ENCODE measurements at regions of chr19 and their contacts with region 1.

Region 1: DNA sequence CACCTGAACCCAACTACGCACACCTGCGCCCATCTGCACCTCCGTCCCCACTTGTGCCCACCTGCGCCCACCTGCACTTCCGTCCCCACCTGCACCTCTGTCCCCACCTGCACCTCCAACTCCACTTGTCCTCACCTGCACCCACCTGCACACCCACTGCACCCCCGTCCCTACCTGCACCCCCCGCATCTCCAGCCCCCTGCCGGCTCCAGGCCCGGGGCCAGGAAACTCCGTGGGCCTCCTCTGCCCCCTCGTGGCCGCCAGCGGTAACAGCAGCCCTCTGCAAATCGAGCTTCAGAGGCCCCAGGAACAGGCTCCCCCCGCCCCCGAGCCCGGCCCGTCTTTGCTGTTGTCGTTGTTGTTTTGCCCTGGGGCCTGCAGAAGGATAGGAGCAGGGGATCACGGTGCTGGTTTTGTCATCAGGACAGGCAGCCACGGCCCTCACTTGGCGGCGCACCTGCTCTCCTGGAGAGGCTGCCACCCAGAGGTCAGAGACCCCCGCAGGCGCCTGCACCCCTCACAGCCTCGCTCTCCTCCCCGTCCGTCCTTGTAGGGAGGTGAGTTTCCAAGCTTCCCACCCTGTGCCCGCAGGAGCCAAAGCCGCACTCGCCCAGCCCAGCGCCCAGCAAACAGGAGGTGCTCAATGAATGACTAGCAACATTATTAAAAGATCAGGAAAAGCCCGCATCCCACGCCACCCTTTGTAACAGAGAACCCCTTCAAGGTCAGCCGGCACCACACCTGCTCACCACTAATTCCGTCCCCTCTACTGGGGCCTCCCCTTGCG is 65.4 kb downstream of the GNG7 start:
- DNase-seq: peak; percentile 58
- ATAC-seq: peak; percentile 52
- H3K4me3 ChIP-seq: peak overlapping the region; percentile 56
- H3K27ac ChIP-seq: no peak overlapping the region
- H3K4me1 ChIP-seq: peaks cover 15% of the 10 kb centered on the region
- H3K27me3 ChIP-seq: no peaks in the 10 kb centered on the region
- CTCF ChIP-seq: peak; percentile 78

Region 2: GRCh38 chr19:2415281-2415972 is 221.7 kb before region 1 on chr19:
- CTCF ChIA-PET with region 1: interaction called, 11 read pairs
- POLR2A ChIA-PET with region 1: no interaction called
- intact Hi-C with region 1: no loop called
- DNase-seq: no peak
- ATAC-seq: no peak
- H3K4me3 ChIP-seq: no peak overlapping the region
- H3K27ac ChIP-seq: no peak overlapping the region
- H3K4me1 ChIP-seq: no peaks in the 10 kb centered on the region
- H3K27me3 ChIP-seq: no peaks in the 10 kb centered on the region
- CTCF ChIP-seq: no peak

Measured in PC-3 (cell line).